Breast epithelium (tissue), 4 donors: ENCODE measurements at regions of chr7 and their contacts with region 1.

Region 1: GRCh38 chr7:106183952-106184351 is 71.8 kb upstream of the SYPL1 start:
- DNase-seq: no peak
- H3K4me3 ChIP-seq: no peak overlapping the region
- H3K27ac ChIP-seq: no peak overlapping the region
- H3K4me1 ChIP-seq: peaks cover 0 to 5% of the 10 kb centered on the region in 2 donors
- H3K27me3 ChIP-seq: no peaks in the 10 kb centered on the region
- CTCF ChIP-seq: no peak
- POLR2A ChIP-seq: no peak

Region 2: DNA sequence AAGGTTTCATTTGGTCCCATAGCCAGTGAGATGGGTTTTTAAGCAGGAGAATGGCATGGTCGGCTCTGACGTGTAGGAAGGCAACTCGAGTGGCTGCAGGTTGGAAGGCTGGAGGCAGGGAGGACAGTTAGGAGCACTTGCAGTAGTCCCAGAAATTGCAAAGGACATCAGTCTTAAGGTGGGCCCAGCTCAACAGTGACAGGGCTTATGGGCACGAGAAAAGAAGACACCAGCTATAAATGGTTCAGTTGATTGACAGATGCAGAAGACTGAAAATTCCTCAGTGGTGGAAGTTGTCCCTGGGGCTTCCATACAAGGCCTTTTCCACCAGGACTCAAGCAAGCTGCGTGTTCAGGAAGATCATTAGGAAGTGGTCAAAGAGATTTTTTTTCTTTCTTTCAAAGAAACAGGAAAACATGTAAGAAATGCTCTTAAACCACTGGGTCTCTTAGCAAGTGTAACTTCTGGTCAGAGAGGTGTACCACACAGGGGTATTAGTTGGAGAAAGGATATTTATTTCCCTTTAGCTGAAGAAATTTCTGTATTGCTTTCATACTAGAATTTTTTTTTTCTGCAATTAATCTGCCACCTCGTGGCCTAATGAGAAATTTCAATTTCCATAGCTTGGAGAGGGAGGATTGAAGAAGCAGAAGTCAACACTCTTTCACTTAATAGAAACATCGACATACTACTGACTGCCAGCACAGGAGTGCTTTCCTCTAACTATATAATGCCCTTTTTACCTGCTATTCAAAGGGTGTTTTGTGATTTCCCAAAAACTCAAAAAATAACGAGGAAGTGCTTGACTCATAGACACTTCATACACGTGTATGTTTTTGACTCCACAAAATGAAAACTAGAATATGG is 278.3 kb after region 1 on chr7:
- intact Hi-C with region 1: loop called (anchors 2 kb)
- DNase-seq: no peak
- H3K4me3 ChIP-seq: no peak overlapping the region
- H3K27ac ChIP-seq: no peak overlapping the region
- H3K4me1 ChIP-seq: no peaks in the 10 kb centered on the region
- H3K27me3 ChIP-seq: no peaks in the 10 kb centered on the region
- CTCF ChIP-seq: peak; percentile 58 to 80 (median 72)
- POLR2A ChIP-seq: no peak